ENCODE measurements at regions of chr12 and their contacts with region 1.

Region 1: GRCh38 chr12:53825246-53826081 is 73.7 kb upstream of the CISTR start:
- DNase-seq: peak; percentile 69 to 99
- H3K4me3 ChIP-seq: no peak overlapping the region
- H3K27ac ChIP-seq: peak overlapping the region; percentile 87
- H3K4me1 ChIP-seq: peaks cover 79% of the 10 kb centered on the region
- H3K27me3 ChIP-seq: no peaks in the 10 kb centered on the region
- CTCF ChIP-seq: no peak

Region 2: GRCh38 chr12:53561590-53561953 is 263.9 kb before region 1 on chr12:
- CTCF ChIA-PET with region 1: no interaction called
- POLR2A ChIA-PET with region 1: interaction called, 21 read pairs
- intact Hi-C with region 1: no loop called
- DNase-seq: peak; percentile 9 to 93
- H3K4me3 ChIP-seq: peak overlapping the region; percentile 28; the same call in 1 of the 2 replicates
- H3K27ac ChIP-seq: peak overlapping the region; percentile 78
- H3K4me1 ChIP-seq: peaks cover 26% of the 10 kb centered on the region
- H3K27me3 ChIP-seq: no peaks in the 10 kb centered on the region
- CTCF ChIP-seq: no peak

Region 3: DNA sequence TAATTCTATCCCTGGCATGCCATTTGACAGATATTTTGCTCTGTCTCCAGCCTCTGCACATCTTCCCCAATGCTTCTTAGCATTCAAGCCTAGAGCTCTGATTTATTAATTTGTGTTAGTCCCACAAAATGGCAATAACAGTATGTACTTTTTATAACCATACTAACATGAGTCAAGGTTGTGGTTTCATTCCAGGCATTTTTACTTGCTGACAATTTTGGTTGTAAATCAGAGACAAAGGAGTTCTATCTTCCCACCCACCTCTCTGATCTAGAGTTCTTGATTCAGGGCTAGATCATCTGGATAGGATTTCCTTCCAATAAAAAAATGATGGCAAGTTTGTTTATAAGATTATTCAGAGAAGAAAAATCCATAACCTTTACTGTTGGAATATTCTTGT is 55.2 kb before region 1 on chr12:
- CTCF ChIA-PET with region 1: no interaction called
- POLR2A ChIA-PET with region 1: no interaction called
- intact Hi-C with region 1: loop called (anchors 1 kb)
- DNase-seq: peak in 1 of 2 experiments; percentile 92
- H3K4me3 ChIP-seq: no peak overlapping the region
- H3K27ac ChIP-seq: peak overlapping the region; percentile 53
- H3K4me1 ChIP-seq: peaks cover 39% of the 10 kb centered on the region
- H3K27me3 ChIP-seq: no peaks in the 10 kb centered on the region
- CTCF ChIP-seq: no peak

Region 4: DNA sequence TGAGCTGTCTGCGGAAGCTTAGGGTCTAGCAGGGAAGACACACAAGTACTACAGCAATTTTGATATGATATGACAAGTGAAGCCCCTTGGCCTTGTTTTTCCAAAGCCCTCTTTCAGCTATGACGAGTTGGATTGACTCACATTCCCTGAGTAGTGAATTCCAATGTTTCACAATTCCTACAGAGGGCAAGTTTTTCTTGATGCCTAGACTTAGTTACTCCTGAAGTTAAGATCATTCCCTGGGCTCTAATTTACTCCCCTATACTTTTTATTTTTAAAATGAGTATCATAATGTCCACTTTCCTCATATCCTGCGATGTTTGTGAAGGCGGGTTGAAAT is 20.4 kb before region 1 on chr12:
- CTCF ChIA-PET with region 1: interaction called, 4 read pairs
- POLR2A ChIA-PET with region 1: interaction called, 3 read pairs
- intact Hi-C with region 1: loop called (anchors 1 kb)
- DNase-seq: peak in 1 of 2 experiments; percentile 78
- H3K4me3 ChIP-seq: peak overlapping the region; percentile 32; the same call in 1 of the 2 replicates
- H3K27ac ChIP-seq: peak overlapping the region; percentile 96
- H3K4me1 ChIP-seq: peaks cover 74% of the 10 kb centered on the region
- H3K27me3 ChIP-seq: no peaks in the 10 kb centered on the region
- CTCF ChIP-seq: no peak

Region 5: GRCh38 chr12:54472494-54473262 is 647.2 kb after region 1 on chr12:
- CTCF ChIA-PET with region 1: no interaction called
- POLR2A ChIA-PET with region 1: no interaction called
- intact Hi-C with region 1: no loop called
- DNase-seq: no peak
- H3K4me3 ChIP-seq: no peak overlapping the region
- H3K27ac ChIP-seq: no peak overlapping the region
- H3K4me1 ChIP-seq: peaks cover 11% of the 10 kb centered on the region
- H3K27me3 ChIP-seq: no peaks in the 10 kb centered on the region
- CTCF ChIP-seq: no peak